Heart left ventricle (tissue), 16 donors: ENCODE measurements at regions of chr1 and their contacts with region 1.

Region 1: GRCh38 chr1:234206651-234207284 is 166.5 kb upstream of the COA6 start:
- DNase-seq: peak in 2 of 5 donors; percentile 20 to 54
- ATAC-seq: peak in 3 of 4 donors; percentile 50 to 92 (median 86)
- H3K4me3 ChIP-seq: no peak overlapping the region
- H3K27ac ChIP-seq: no peak overlapping the region
- H3K4me1 ChIP-seq: no peaks in the 10 kb centered on the region
- H3K27me3 ChIP-seq: peaks cover 0 to 11% (median under 1%) of the 10 kb centered on the region in 9 donors
- CTCF ChIP-seq: no peak
- POLR2A ChIP-seq: no peak

Region 2: GRCh38 chr1:234173968-234174367 is 32.8 kb before region 1 on chr1:
- intact Hi-C with region 1: loop called in 1 of 10 experiments (anchors 2 kb)
- DNase-seq: no peak
- ATAC-seq: no peak
- H3K4me3 ChIP-seq: no peak overlapping the region
- H3K27ac ChIP-seq: no peak overlapping the region
- H3K4me1 ChIP-seq: no peaks in the 10 kb centered on the region
- H3K27me3 ChIP-seq: peaks cover 0 to 3% (median 0%) of the 10 kb centered on the region in 9 donors
- CTCF ChIP-seq: no peak
- POLR2A ChIP-seq: no peak